Common myeloid progenitor, CD34-positive (primary cell): ENCODE measurements at regions of chr2 and their contacts with region 1.

Region 1: DNA sequence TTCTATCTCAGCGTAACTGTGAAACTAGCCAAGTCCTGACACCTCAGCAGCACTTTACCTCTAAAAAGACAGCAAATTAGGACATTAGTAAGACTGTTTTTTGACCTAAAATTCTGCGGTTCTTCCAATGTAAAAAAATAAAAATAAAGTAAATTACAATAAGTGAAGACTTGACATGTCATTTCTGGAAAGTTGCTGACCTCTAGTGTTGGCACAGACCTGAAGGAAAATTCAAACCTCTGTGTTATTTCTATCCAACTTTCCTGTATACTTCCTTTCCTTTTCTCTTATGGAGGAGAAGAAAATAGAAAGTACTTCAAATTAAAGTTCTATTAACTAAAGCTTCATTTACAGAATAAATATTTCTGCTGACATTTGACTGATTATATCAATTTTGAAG is 110.6 kb downstream of the TMEM182 start:
- DNase-seq: peak in 2 of 3 donors; percentile 15 to 28
- H3K4me3 ChIP-seq: no peak overlapping the region
- H3K27ac ChIP-seq: no peak overlapping the region
- H3K4me1 ChIP-seq: peaks cover 0 to 6% (median 2%) of the 10 kb centered on the region in 4 experiments
- H3K27me3 ChIP-seq: no peaks in the 10 kb centered on the region

Region 2: DNA sequence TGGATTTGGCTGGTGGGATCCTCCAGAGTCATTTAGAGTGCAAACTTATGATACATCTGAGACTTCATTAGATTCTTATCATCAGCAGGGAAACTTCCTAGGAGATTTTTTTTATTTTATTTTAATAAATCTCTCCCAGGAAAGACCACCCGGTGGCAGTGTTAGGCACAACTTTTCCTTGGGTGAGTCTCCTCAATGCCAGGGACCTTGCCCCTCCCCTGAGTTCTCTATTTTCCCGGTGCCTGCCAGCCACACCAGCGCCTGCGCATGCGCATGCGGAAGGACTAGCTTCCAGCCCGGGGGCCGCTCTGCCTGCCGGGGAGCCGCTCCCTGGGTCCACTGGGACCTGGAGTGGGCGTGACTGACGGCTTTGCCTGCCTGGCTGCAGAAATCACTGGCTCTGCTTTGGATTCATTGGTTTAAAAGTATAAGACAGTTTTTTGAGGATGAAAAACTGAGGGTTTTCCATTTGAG is 24.0 kb before region 1 on chr2:
- CTCF ChIA-PET with region 1: interaction called, 12 read pairs
- POLR2A ChIA-PET with region 1: no interaction called
- DNase-seq: peak; percentile 70 to 78 (median 75)
- H3K4me3 ChIP-seq: peak overlapping the region in 6 of 7 experiments; percentile 46 to 76 (median 70)
- H3K27ac ChIP-seq: no peak overlapping the region
- H3K4me1 ChIP-seq: peaks cover 0 to 9% (median 3%) of the 10 kb centered on the region in 4 experiments
- H3K27me3 ChIP-seq: no peaks in the 10 kb centered on the region